GM12878 (cell line): ENCODE measurements at regions of chr12 and their contacts with region 1.

Region 1: GRCh38 chr12:49342066-49342913 is 4.4 kb upstream of the DNAJC22 start:
- DNase-seq: no peak
- ATAC-seq: peak; percentile 80
- H3K4me3 ChIP-seq: peak overlapping the region; percentile 8; the same call in 1 of the 2 replicates
- H3K27ac ChIP-seq: no peak overlapping the region
- H3K4me1 ChIP-seq: peaks cover 32% of the 10 kb centered on the region
- H3K27me3 ChIP-seq: peaks cover 24 to 33% of the 10 kb centered on the region in 2 experiments
- CTCF ChIP-seq: peak; percentile 72 to 91 (median 91)
- EP300 ChIP-seq: no peak
- POLR2A ChIP-seq: no peak
- RAD21 ChIP-seq: peak; percentile 44; the same call in 1 of the 2 replicates

Region 2: DNA sequence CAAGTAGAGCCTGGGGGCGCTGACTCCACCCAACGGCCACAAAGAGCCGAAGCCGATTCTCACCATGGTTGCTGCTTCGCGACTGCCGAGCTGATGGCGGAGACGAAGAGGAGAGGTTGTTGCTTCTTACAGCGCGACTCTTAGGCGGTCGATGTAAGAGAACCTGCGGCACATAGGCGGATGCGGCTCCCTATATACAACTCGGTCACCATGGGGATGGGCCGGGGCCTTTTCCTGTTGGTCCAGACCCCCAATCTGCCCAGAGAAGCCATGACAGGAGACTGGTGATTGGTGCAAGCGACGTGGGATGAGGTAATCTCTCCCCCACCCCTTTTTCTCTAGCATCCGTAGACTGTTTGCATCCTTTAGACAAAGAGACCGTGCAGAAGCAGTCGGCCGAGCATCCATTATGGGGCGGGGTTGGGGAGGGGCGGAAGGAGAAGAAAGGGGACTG is 153.3 kb before region 1 on chr12 and contains the start of gene TUBA1A:
- CTCF ChIA-PET with region 1: no interaction called
- POLR2A ChIA-PET with region 1: no interaction called
- RAD21 ChIA-PET with region 1: no interaction called
- SMC1A ChIA-PET with region 1: no interaction called
- in situ Hi-C with region 1: no loop called
- intact Hi-C with region 1: no loop called
- DNase-seq: peak; percentile 75
- ATAC-seq: peak; percentile 93
- H3K4me3 ChIP-seq: peak within 1 kb of the TSS; percentile 75
- H3K27ac ChIP-seq: peak within 1 kb of the TSS; percentile 72
- H3K4me1 ChIP-seq: no peaks in the 10 kb centered on the region; the same call in none of the 2 replicates
- H3K27me3 ChIP-seq: no peaks in the 10 kb centered on the region; a peak in 1 of 4 replicates
- CTCF ChIP-seq: no peak
- EP300 ChIP-seq: no peak
- POLR2A ChIP-seq: peak; percentile 96
- RAD21 ChIP-seq: no peak
- polyA plus RNA-seq, gene TUBA1A: 431 to 496 TPM

Region 3: DNA sequence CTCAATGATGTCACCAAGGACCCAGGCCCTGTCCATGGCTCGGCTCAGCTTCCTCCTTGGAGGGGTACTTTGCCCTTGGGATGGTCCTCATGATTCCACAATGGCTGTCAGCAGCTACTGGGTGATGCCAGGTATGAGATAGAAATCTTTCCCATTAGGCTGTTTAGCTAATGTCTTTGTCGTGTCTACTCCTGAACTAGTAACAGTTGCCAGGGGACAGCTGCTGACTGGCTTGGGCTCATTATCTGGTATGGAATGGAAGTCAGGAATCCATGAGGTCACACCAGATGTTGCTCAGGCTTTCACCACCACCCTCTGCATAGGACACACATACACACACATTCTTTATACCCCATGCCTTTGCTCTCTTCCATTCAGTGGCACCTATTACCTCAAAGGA is 38.1 kb before region 1 on chr12:
- CTCF ChIA-PET with region 1: interaction called, 231 read pairs
- POLR2A ChIA-PET with region 1: no interaction called
- RAD21 ChIA-PET with region 1: interaction called, 4 read pairs
- SMC1A ChIA-PET with region 1: no interaction called
- in situ Hi-C with region 1: no loop called
- intact Hi-C with region 1: no loop called
- DNase-seq: no peak
- ATAC-seq: no peak
- H3K4me3 ChIP-seq: no peak overlapping the region
- H3K27ac ChIP-seq: no peak overlapping the region
- H3K4me1 ChIP-seq: no peaks in the 10 kb centered on the region
- H3K27me3 ChIP-seq: no peaks in the 10 kb centered on the region
- CTCF ChIP-seq: no peak
- EP300 ChIP-seq: no peak
- POLR2A ChIP-seq: no peak
- RAD21 ChIP-seq: no peak

Region 4: GRCh38 chr12:49322708-49323523 is 19.4 kb before region 1 on chr12 and contains the start of gene TROAP:
- CTCF ChIA-PET with region 1: interaction called, 37 read pairs
- POLR2A ChIA-PET with region 1: interaction called, 4 read pairs
- RAD21 ChIA-PET with region 1: interaction called, 15 read pairs
- SMC1A ChIA-PET with region 1: interaction called, 4 read pairs
- in situ Hi-C with region 1: no loop called
- intact Hi-C with region 1: no loop called
- DNase-seq: peak; percentile 96
- ATAC-seq: peak; percentile 99
- H3K4me3 ChIP-seq: peak within 1 kb of the TSS; percentile 95
- H3K27ac ChIP-seq: peak within 1 kb of the TSS; percentile 87
- H3K4me1 ChIP-seq: peaks cover 9% of the 10 kb centered on the region
- H3K27me3 ChIP-seq: no peaks in the 10 kb centered on the region
- CTCF ChIP-seq: no peak
- EP300 ChIP-seq: no peak
- POLR2A ChIP-seq: peak; percentile 95
- RAD21 ChIP-seq: no peak
- polyA plus RNA-seq, gene TROAP: 26.8 to 46.9 TPM

Region 5: DNA sequence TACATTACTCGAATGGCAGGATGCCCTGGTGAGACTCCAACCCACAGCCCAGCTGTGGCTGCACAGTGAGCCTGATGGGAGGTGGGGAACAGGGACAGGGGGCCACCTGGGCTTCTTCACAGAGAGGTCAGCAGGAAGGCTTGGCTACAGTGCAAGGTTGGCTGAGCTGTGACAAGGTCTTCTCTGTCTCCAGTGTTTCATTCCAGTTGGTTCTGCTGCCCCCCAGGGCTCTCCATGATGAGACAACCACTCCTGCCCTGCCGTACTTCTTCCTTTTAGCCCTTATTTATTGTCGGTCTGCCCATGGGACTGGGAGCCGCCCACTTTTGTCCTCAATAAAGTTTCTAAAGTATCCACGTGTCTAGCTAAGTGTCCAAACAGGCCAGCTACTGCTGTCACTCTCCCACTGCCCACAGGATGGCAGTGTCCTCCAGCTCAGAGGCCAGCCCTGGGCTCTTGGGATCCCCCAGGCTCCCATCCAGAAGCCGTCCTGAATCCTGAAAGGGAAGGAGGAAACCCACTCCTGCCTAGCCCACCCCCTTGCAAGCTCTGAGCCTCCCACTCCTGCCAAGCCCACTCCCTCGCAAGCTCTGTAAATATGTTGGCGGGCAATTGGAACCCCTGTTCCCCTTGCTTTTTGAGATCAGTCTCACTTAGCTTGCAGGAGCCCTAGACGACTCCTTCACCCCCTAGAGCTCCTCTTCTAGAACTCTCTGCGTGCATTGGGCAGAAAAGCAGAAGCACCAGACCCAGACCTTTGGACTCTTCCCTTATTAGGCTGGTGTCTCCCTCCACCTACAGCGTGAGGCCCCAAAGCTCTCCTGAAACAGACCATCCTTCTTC is 10.7 kb before region 1 on chr12:
- CTCF ChIA-PET with region 1: interaction called, 70 read pairs
- POLR2A ChIA-PET with region 1: interaction called, 9 read pairs
- RAD21 ChIA-PET with region 1: interaction called, 25 read pairs
- SMC1A ChIA-PET with region 1: interaction called, 22 read pairs
- in situ Hi-C with region 1: no loop called
- intact Hi-C with region 1: no loop called
- DNase-seq: no peak
- ATAC-seq: peak; percentile 85
- H3K4me3 ChIP-seq: no peak overlapping the region
- H3K27ac ChIP-seq: no peak overlapping the region
- H3K4me1 ChIP-seq: no peaks in the 10 kb centered on the region
- H3K27me3 ChIP-seq: peaks cover 3 to 12% of the 10 kb centered on the region in 2 experiments
- CTCF ChIP-seq: peak; percentile 55 to 68 (median 59)
- EP300 ChIP-seq: no peak
- POLR2A ChIP-seq: no peak
- RAD21 ChIP-seq: peak; percentile 58